ENCODE measurements at regions of chr1 and their contacts with region 1.

Region 1: GRCh38 chr1:214537219-214537618 is 14.2 kb downstream of the PTPN14 start:
- DNase-seq: no peak
- ATAC-seq: peak; percentile 18; the same call in 2 of the 3 replicates
- H3K4me3 ChIP-seq: no peak overlapping the region
- H3K27ac ChIP-seq: no peak overlapping the region
- H3K4me1 ChIP-seq: no peaks in the 10 kb centered on the region
- H3K27me3 ChIP-seq: no peaks in the 10 kb centered on the region; a peak in 1 of 4 replicates
- CTCF ChIP-seq: no peak
- EP300 ChIP-seq: no peak
- POLR2A ChIP-seq: no peak
- RAD21 ChIP-seq: no peak

Region 2: DNA sequence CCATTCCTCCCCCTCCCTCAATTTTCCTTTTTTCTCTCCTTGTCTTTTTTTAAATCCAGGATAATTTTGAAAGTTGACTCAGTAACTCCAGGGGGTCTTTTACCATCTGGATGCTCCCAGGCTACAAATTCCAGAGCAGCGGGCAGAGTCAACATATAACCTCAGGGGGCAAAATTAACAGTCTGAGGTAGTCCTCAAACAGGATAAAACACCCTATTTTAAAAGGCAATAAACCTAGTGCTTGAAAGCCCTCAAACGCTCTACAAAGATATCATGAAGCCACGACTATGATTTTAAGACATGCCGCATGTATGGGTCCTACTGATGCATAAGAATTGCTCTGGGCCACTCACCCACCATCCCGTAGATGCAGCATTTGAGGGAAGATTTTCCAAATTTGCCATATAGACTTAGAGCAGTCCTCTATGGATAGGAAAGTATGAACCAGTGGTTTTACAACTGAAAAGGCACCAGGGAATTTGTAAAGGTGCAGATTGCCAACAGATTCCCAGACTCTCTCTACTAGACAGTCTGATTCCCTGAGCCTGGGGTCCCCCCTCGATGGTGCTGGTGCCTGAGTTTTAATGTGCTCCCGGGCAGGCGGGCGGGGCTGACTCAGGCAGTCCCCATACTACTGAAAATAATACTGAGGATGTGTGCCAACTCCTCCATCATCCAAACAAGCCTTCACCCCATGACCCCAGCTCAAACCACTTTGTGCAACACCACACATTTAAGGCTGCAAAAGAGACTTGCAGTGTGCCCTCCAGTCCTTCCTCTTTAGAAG is 23.0 kb before region 1 on chr1:
- CTCF ChIA-PET with region 1: interaction called, 3 read pairs
- POLR2A ChIA-PET with region 1: interaction called, 3 read pairs
- RAD21 ChIA-PET with region 1: interaction called, 6 read pairs
- SMC1A ChIA-PET with region 1: interaction called, 42 read pairs
- in situ Hi-C with region 1: no loop called
- intact Hi-C with region 1: no loop called
- DNase-seq: no peak
- ATAC-seq: peak; percentile 25; the same call in 2 of the 3 replicates
- H3K4me3 ChIP-seq: no peak overlapping the region
- H3K27ac ChIP-seq: no peak overlapping the region
- H3K4me1 ChIP-seq: no peaks in the 10 kb centered on the region
- H3K27me3 ChIP-seq: no peaks in the 10 kb centered on the region; a peak in 1 of 4 replicates
- CTCF ChIP-seq: no peak
- EP300 ChIP-seq: no peak
- POLR2A ChIP-seq: no peak
- RAD21 ChIP-seq: no peak

Region 3: DNA sequence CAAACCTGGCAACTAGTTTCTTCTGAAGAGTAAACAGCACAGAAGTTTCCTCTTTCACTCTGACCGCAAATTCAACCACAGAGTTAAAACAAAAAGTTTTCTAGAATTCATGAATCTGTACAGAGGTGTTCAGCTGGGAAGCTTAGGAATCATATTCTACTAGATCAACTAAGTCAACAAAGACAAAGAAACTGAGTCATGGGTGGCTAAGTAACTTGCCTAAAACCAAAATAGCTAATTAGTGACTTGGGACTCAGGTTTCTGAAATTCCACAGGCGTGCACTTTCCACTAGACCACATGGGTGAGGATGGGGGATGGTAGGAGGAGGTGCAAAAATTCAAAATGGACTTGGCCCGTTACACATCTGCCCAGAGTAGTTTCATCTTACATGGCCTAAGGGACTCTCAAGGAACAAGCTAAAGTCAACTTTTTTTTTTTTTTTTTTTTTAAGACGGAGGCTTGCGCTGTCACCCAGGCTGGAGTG is 11.6 kb before region 1 on chr1:
- CTCF ChIA-PET with region 1: interaction called, 16 read pairs
- POLR2A ChIA-PET with region 1: interaction called, 10 read pairs
- RAD21 ChIA-PET with region 1: interaction called, 47 read pairs
- SMC1A ChIA-PET with region 1: interaction called, 66 read pairs
- in situ Hi-C with region 1: no loop called
- intact Hi-C with region 1: no loop called
- DNase-seq: no peak
- ATAC-seq: peak; percentile 81
- H3K4me3 ChIP-seq: no peak overlapping the region
- H3K27ac ChIP-seq: no peak overlapping the region
- H3K4me1 ChIP-seq: peaks cover 5% of the 10 kb centered on the region; the same call in 1 of the 2 replicates
- H3K27me3 ChIP-seq: no peaks in the 10 kb centered on the region
- CTCF ChIP-seq: no peak
- EP300 ChIP-seq: no peak
- POLR2A ChIP-seq: no peak
- RAD21 ChIP-seq: no peak

Region 4: DNA sequence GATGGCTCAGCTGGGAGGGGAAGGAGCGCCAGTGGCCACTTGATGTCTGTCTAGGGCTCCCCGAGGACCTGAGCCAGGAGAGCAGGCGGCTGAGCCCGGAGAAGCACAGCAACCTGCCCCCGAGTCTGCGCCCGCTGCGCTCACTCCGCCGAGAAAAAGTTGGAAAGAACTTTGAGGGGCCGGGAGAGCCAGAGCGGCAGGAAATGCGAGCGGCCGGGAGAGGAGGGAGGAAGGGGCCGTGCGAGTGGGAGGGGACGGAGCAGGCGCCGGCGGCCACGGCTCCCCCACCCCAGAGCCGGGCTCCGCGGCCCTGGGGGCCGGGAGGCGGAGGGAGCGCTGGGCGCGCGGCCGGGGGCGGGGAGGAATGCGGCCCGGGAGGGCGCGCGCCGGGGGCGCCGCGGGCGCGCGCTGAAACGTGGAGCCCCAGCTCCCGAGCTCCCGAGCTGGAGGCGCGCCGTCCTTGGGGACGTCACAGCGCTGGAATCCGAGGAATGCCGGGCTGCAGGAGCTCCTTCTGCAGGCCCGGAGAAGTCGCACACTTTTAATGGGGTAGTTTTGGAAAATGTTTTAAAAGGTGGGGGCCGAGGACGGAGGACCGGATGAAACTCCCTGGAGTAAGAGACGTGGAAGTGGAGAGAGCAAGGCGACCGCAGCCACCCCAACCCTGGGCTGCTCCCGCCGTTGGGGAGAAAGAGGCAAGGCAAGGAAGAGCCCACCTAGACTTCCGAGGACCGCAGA is 14.4 kb after region 1 on chr1 and contains the start of gene PTPN14:
- CTCF ChIA-PET with region 1: interaction called, 9 read pairs
- POLR2A ChIA-PET with region 1: interaction called, 40 read pairs
- RAD21 ChIA-PET with region 1: interaction called, 51 read pairs
- SMC1A ChIA-PET with region 1: interaction called, 83 read pairs
- in situ Hi-C with region 1: no loop called
- intact Hi-C with region 1: no loop called
- DNase-seq: no peak
- ATAC-seq: peak; percentile 44
- H3K4me3 ChIP-seq: no peak within 1 kb of the TSS
- H3K27ac ChIP-seq: no peak within 1 kb of the TSS
- H3K4me1 ChIP-seq: no peaks in the 10 kb centered on the region
- H3K27me3 ChIP-seq: peaks cover 3 to 7% of the 10 kb centered on the region in 2 experiments; a peak in 3 of 4 replicates
- CTCF ChIP-seq: no peak
- EP300 ChIP-seq: no peak
- POLR2A ChIP-seq: no peak
- RAD21 ChIP-seq: no peak
- polyA plus RNA-seq, gene PTPN14: 0.05 to 0.14 TPM

Region 5: GRCh38 chr1:214566158-214567104 is 29.2 kb after region 1 on chr1:
- CTCF ChIA-PET with region 1: interaction called, 5 read pairs
- POLR2A ChIA-PET with region 1: interaction called, 3 read pairs
- RAD21 ChIA-PET with region 1: interaction called, 8 read pairs
- SMC1A ChIA-PET with region 1: interaction called, 26 read pairs
- in situ Hi-C with region 1: no loop called
- intact Hi-C with region 1: no loop called
- DNase-seq: no peak
- ATAC-seq: peak; percentile 67
- H3K4me3 ChIP-seq: no peak overlapping the region
- H3K27ac ChIP-seq: no peak overlapping the region
- H3K4me1 ChIP-seq: no peaks in the 10 kb centered on the region
- H3K27me3 ChIP-seq: no peaks in the 10 kb centered on the region
- CTCF ChIP-seq: no peak
- EP300 ChIP-seq: no peak
- POLR2A ChIP-seq: no peak
- RAD21 ChIP-seq: no peak

Region 6: DNA sequence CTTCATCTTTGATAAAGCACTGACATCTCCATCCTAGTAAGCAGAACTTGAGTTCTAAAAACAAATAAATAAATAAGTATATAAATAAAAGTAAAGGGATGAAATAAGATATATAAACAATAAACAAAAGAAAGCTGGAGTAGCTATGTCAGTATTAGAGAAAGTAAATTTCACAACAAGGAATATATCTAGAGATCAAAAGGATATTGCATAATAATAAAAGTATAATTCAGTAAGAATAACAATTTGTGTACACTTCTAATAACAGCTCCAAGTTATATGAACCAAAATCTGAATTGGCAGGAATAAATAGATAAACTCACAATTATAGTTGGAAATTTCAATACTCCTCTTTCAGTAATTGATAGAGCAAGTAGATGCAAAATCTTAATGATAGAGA is 55.9 kb after region 1 on chr1:
- CTCF ChIA-PET with region 1: no interaction called
- POLR2A ChIA-PET with region 1: no interaction called
- RAD21 ChIA-PET with region 1: no interaction called
- SMC1A ChIA-PET with region 1: no interaction called
- in situ Hi-C with region 1: no loop called
- intact Hi-C with region 1: no loop called
- DNase-seq: no peak
- ATAC-seq: no peak
- H3K4me3 ChIP-seq: no peak overlapping the region
- H3K27ac ChIP-seq: no peak overlapping the region
- H3K4me1 ChIP-seq: no peaks in the 10 kb centered on the region
- H3K27me3 ChIP-seq: no peaks in the 10 kb centered on the region
- CTCF ChIP-seq: no peak
- EP300 ChIP-seq: no peak
- POLR2A ChIP-seq: no peak
- RAD21 ChIP-seq: no peak

Measured in GM12878 (cell line).